ENCODE measurements at regions of chr9 and their contacts with region 1.

Region 1: GRCh38 chr9:27571011-27571410 is 2.3 kb downstream of the C9orf72 start:
- DNase-seq: no peak
- ATAC-seq: no peak
- H3K4me3 ChIP-seq: no peak overlapping the region
- H3K27ac ChIP-seq: no peak overlapping the region
- H3K4me1 ChIP-seq: peaks cover 11% of the 10 kb centered on the region
- H3K27me3 ChIP-seq: no peaks in the 10 kb centered on the region
- CTCF ChIP-seq: no peak

Region 2: DNA sequence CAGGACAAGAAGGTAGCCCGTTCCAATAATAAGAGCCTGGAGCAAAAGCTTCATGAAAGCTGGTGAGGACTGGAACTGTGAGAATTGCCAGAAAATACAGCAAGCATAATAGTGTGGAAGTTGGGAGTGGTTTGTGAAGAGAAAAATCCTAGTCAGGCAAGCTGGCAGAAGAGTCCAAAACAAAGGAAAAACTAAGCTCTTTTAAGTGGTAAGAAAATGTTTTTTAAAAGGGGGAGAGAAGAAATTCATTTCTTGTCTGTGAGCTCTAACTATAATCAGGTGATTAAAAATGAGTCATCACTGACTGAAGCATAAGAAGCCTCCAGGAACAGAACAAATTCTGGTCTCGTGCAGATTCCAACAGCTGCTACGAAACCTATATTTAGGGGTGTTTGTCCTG is 781.1 kb before region 1 on chr9:
- intact Hi-C with region 1: no loop called
- DNase-seq: no peak
- ATAC-seq: no peak
- H3K4me3 ChIP-seq: no peak overlapping the region
- H3K27ac ChIP-seq: no peak overlapping the region
- H3K4me1 ChIP-seq: no peaks in the 10 kb centered on the region
- H3K27me3 ChIP-seq: no peaks in the 10 kb centered on the region
- CTCF ChIP-seq: no peak

Region 3: GRCh38 chr9:27548055-27548741 is 22.8 kb before region 1 on chr9:
- intact Hi-C with region 1: loop called in 1 of 2 experiments (anchors 1 kb)
- DNase-seq: no peak
- ATAC-seq: peak; percentile 79 to 90 (median 86)
- H3K4me3 ChIP-seq: no peak overlapping the region
- H3K27ac ChIP-seq: peak overlapping the region; percentile 24
- H3K4me1 ChIP-seq: peaks cover 27% of the 10 kb centered on the region
- H3K27me3 ChIP-seq: no peaks in the 10 kb centered on the region
- CTCF ChIP-seq: peak; percentile 52

Measured in psoas muscle (tissue), 8 donors.